PC-3 (cell line): ENCODE measurements at regions of chr9 and their contacts with region 1.

Region 1: DNA sequence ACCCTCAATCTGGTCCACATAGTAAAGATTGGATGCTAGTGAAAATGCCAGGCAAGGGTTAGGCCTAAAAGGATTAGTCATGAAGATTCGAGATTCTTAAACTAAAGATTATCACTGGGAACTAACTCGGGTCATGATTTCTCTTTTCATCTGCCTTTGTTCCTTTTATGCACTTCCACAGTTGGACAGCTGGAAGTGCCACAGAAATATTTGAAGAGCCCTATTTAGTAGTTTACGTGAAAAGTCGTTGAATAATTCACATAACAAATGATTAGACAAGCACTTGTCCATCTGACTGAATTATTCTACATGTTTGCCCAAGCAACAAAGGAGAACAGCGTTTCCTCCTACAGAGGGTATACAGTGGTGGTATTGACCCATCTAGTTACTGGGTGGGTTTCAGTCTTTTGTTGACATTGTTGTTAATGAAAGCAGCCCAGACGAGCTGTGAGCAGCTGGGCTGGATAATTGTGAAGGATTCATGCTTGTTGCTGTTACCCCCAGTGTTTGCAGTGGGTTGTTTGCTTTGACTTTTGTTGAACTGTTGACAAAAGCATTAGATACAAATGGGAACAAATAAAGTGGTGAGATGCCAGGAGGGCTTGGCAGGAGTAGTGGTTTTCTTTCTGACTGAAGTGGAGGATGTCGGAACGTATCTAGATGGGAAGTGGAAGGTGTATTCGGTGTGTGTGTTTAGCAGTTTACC is 96.1 kb downstream of the TLE4 start:
- DNase-seq: peak; percentile 72
- ATAC-seq: peak; percentile 20
- H3K4me3 ChIP-seq: peak overlapping the region; percentile 4; the same call in 1 of the 2 replicates
- H3K27ac ChIP-seq: peak overlapping the region; percentile 97
- H3K4me1 ChIP-seq: peaks cover 63% of the 10 kb centered on the region
- H3K27me3 ChIP-seq: no peaks in the 10 kb centered on the region
- CTCF ChIP-seq: no peak

Region 2: DNA sequence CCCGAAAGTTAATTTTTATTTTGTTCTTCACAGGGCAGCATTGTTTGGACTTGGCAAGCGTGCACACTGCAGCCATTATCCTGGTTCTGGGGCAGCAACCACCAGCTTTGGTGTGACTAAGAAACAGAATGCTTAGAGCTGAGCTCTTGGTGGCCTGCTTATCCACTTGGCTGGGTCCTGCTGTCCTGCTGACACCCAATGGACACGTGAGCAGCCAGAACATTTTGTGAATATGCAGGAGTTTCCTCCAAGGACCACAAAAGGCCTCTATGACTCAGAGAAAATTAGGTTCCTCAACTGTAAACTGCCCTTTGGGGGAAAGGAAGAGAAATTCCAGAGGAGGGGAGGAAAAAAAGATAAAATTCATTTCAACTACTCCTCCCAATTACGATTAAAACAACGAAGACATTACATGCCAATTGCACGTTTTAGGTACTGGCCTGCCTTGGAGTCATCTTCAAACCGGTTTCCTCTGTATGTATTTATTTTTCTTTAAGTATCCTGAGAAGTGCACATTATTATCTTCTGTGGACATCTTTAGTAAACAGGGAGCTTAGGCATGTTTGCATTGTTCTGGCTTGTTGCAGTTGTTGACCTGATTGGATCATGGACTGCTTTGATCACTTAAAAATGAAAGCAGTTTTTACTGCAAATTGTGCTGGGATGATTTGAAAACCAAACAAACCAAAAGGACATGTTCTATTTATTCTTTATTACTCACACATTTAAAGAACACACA is 178.5 kb before region 1 on chr9:
- CTCF ChIA-PET with region 1: no interaction called
- POLR2A ChIA-PET with region 1: no interaction called
- intact Hi-C with region 1: loop called (anchors 1 kb)
- DNase-seq: peak; percentile 86
- ATAC-seq: peak; percentile 90
- H3K4me3 ChIP-seq: peak overlapping the region; percentile 50
- H3K27ac ChIP-seq: peak overlapping the region; percentile 92
- H3K4me1 ChIP-seq: peaks cover 35% of the 10 kb centered on the region
- H3K27me3 ChIP-seq: no peaks in the 10 kb centered on the region
- CTCF ChIP-seq: no peak

Region 3: DNA sequence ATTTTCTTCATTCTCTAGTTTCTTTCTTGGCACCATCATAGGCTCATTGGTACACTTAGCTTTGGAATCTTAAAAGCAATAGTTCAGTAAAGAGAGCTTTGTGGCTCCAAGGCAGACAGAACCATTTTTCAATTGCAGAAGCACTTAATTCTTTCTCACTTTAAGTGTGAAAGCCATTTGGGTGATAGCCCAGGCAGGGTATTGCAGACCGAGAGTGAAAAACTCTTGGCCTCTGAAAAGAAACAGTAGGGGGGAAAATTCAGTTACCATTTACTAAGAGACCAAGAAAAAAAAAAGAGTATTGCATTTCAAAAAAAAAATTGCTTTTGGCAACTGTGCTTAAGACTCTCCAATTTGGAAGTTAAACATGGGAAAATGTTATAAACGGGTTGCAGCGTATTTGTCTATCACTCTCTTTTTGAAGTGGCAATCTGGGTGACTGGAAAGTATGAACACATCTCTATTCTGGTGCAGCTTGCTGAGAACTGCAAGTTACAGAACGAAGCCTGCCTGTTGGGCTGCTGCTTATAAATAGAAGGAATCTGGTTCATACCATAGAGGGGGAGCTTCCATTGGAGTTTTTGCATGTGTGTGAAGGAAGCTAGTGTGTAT is 74.3 kb after region 1 on chr9:
- CTCF ChIA-PET with region 1: no interaction called
- POLR2A ChIA-PET with region 1: no interaction called
- intact Hi-C with region 1: no loop called
- DNase-seq: no peak
- ATAC-seq: no peak
- H3K4me3 ChIP-seq: no peak overlapping the region
- H3K27ac ChIP-seq: no peak overlapping the region
- H3K4me1 ChIP-seq: no peaks in the 10 kb centered on the region
- H3K27me3 ChIP-seq: no peaks in the 10 kb centered on the region
- CTCF ChIP-seq: no peak

Region 4: GRCh38 chr9:79812507-79813257 is 144.8 kb after region 1 on chr9:
- CTCF ChIA-PET with region 1: no interaction called
- POLR2A ChIA-PET with region 1: no interaction called
- intact Hi-C with region 1: loop called (anchors 5 kb)
- DNase-seq: no peak
- ATAC-seq: no peak
- H3K4me3 ChIP-seq: no peak overlapping the region
- H3K27ac ChIP-seq: no peak overlapping the region
- H3K4me1 ChIP-seq: peaks cover 24% of the 10 kb centered on the region
- H3K27me3 ChIP-seq: no peaks in the 10 kb centered on the region
- CTCF ChIP-seq: no peak